A673 (cell line): ENCODE measurements at regions of chr20 and their contacts with region 1.

Region 1: GRCh38 chr20:59222253-59223181 is 58.9 kb downstream of the ZNF831 start:
- DNase-seq: peak; percentile 79
- H3K4me3 ChIP-seq: peak overlapping the region; percentile 47
- H3K27ac ChIP-seq: no peak overlapping the region
- H3K4me1 ChIP-seq: peaks cover 13% of the 10 kb centered on the region
- H3K27me3 ChIP-seq: peaks cover 79% of the 10 kb centered on the region
- CTCF ChIP-seq: peak; percentile 96

Region 2: DNA sequence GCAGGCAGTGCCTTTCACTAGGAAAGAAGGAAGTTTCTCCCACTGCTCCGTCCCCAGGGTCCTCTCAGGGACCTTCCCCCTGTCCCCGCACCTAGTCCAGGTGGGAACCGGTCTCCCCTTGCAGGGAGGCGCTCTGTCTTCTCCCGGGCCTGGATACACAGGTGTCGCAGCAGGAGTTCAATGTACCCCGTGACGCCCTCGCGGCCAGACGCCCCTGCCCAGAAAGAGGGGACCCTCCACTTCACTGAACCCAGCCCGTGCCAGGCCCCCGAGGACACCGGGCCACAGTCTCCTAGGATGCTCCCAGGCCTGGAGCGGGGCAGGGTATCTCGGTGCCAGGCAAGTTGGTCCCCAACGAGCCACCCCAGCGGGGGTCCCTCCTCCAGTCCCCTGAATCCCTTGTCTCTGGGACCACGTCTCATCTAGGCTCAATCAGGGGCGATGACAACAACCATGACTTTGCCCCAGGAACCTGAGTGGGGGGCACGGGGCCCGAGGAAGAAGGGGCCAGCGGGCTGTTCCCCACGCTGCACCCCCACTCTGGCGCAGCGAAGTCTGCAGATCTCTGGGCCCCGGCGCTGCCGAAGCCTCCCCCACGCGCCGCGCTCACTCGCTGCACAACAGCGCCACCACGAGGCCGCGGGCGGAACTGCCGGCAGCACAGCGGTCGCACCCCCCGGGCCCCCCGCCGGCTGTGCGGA is 180.9 kb after region 1 on chr20:
- CTCF ChIA-PET with region 1: no interaction called
- POLR2A ChIA-PET with region 1: no interaction called
- intact Hi-C with region 1: loop called (anchors 10 kb)
- DNase-seq: peak; percentile 66
- H3K4me3 ChIP-seq: peak overlapping the region; percentile 24
- H3K27ac ChIP-seq: no peak overlapping the region
- H3K4me1 ChIP-seq: peaks cover 10% of the 10 kb centered on the region
- H3K27me3 ChIP-seq: peaks cover 79% of the 10 kb centered on the region
- CTCF ChIP-seq: peak; percentile 96

Region 3: GRCh38 chr20:59455402-59456341 is 233.2 kb after region 1 on chr20:
- CTCF ChIA-PET with region 1: no interaction called
- POLR2A ChIA-PET with region 1: no interaction called
- intact Hi-C with region 1: loop called (anchors 5 kb)
- DNase-seq: peak; percentile 42
- H3K4me3 ChIP-seq: no peak overlapping the region
- H3K27ac ChIP-seq: no peak overlapping the region
- H3K4me1 ChIP-seq: no peaks in the 10 kb centered on the region
- H3K27me3 ChIP-seq: peaks cover 3% of the 10 kb centered on the region
- CTCF ChIP-seq: peak; percentile 76